ENCODE measurements at regions of chr15 and their contacts with region 1.

Region 1: GRCh38 chr15:41568350-41569017 is 9.5 kb downstream of the TYRO3 start:
- DNase-seq: peak; percentile 98
- ATAC-seq: peak; percentile 88
- H3K4me3 ChIP-seq: peak overlapping the region in 2 of 3 experiments; percentile 14 to 54; a peak in 4 of 6 replicates
- H3K27ac ChIP-seq: peak overlapping the region; percentile 91
- H3K4me1 ChIP-seq: peaks cover 84% of the 10 kb centered on the region
- H3K27me3 ChIP-seq: no peaks in the 10 kb centered on the region
- CTCF ChIP-seq: peak; percentile 42
- EP300 ChIP-seq: peak; percentile 83 to 94
- POLR2A ChIP-seq: peak in 1 of 2 experiments; percentile 49; a peak in 2 of 4 replicates
- RAD21 ChIP-seq: 0 out of 2 replicates have a peak, but pooled peaks have one; percentile 53

Region 2: GRCh38 chr15:41544650-41545015 is 23.9 kb before region 1 on chr15:
- CTCF ChIA-PET with region 1: no interaction called
- POLR2A ChIA-PET with region 1: interaction called, 19 read pairs
- in situ Hi-C with region 1: no loop called
- intact Hi-C with region 1: no loop called
- DNase-seq: no peak
- ATAC-seq: peak; percentile 10
- H3K4me3 ChIP-seq: peak overlapping the region in 2 of 3 experiments; percentile 65 to 85; a peak in 3 of 6 replicates
- H3K27ac ChIP-seq: no peak overlapping the region
- H3K4me1 ChIP-seq: peaks cover 40% of the 10 kb centered on the region
- H3K27me3 ChIP-seq: no peaks in the 10 kb centered on the region
- CTCF ChIP-seq: no peak
- EP300 ChIP-seq: no peak
- POLR2A ChIP-seq: no peak
- RAD21 ChIP-seq: no peak

Region 3: DNA sequence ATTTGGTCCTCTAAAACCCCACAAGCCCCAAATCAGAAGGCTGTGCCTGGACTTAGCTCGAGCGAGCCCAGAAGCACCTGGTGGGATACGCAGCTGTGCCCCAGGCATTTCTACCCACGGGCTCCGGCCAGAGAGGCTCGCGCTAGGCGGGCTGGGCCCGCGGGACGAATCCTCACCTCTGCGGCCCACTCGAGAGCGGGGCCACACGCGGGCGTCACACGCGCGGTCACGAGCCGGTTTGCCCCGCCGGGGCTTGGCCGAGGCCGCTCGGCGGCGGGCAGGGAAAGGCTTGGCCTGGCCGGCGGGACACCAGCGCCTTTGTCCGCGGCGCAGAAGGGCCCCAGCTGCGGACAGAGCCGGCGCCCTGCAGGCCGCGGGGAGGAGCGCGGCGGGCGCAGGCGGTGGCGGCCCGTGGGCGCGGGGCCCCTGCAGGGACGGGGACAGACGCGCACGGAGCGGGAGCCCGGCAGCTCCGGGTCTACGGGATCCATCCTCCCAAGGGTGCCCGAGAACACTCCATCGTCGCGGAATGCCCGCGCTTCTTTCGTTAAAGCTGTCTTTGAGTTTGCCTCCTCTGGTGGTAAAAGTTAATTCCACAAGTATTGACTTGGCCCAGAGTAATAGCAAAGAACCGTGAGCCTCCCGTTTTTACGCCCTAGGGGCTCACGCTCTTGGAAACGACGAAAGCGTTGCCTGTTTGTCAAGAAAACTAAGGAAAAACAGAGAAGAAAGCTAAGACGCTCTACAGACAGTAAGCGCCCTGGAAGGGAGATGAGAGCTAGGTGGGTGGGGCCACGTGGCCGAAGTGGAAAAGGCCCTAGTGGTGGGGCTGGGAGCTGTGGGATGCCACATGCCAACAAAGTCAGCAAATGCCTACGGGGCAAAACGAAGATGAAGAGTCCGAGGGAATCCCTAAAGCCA is 16.9 kb after region 1 on chr15:
- CTCF ChIA-PET with region 1: no interaction called
- POLR2A ChIA-PET with region 1: interaction called, 32 read pairs
- in situ Hi-C with region 1: no loop called
- intact Hi-C with region 1: no loop called
- DNase-seq: no peak
- ATAC-seq: peak; percentile 91
- H3K4me3 ChIP-seq: peak overlapping the region; percentile 57 to 70 (median 57); a peak in 5 of 6 replicates
- H3K27ac ChIP-seq: peak overlapping the region; percentile 61
- H3K4me1 ChIP-seq: peaks cover 20% of the 10 kb centered on the region
- H3K27me3 ChIP-seq: no peaks in the 10 kb centered on the region
- CTCF ChIP-seq: 0 out of 2 replicates have a peak, but pooled peaks have one; percentile 24
- EP300 ChIP-seq: no peak
- POLR2A ChIP-seq: no peak
- RAD21 ChIP-seq: peak; percentile 48

Region 4: DNA sequence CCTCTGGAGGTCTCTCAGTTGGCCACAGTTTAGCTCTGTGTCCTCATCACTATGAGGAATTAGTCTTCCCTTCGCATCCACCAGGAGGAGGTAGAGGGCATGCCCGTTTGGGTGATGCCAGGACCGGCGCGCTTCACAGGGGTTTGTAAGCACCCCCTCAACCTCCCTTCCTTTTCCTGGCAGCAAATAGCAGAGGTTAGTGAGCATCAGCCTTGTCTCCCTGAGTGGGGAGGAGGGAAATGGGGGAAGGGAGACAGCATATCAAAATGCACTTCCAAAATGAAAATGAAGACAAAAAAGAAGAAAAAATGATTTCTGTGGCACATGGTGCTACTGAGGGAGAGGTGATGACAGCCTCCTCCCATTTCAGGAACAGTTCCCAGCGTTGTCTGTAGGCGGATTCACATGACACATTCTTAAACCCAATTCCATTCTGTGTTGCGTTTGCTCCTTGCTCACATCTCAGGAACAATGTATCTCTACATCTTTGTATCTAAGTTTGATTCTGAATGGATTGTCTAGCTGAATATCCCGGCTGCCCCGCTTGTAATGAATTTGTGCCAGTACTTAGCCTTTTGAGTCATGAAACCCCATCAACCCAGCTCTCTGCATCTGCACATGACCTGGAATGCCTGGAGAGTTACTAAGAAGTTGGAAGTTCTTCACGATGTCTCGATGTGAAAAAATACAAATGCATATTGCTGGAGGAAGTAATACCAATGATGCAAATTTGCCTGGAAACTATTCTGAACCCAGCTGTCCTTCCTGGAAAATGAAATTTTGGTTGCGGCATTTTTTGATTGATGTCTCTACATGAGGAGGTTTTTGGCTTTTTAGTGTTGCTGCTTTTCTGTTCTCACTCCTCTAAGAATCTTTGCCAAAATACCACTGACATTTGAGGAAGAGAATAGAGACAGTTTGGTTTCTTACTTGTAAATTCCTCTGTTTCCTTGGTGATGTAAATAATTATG is 35.7 kb after region 1 on chr15:
- CTCF ChIA-PET with region 1: no interaction called
- POLR2A ChIA-PET with region 1: interaction called, 10 read pairs
- in situ Hi-C with region 1: no loop called
- intact Hi-C with region 1: no loop called
- DNase-seq: peak; percentile 63
- ATAC-seq: peak; percentile 95
- H3K4me3 ChIP-seq: peak overlapping the region in 1 of 3 experiments; percentile 47; a peak in 2 of 6 replicates
- H3K27ac ChIP-seq: no peak overlapping the region
- H3K4me1 ChIP-seq: peaks cover 23% of the 10 kb centered on the region
- H3K27me3 ChIP-seq: no peaks in the 10 kb centered on the region
- CTCF ChIP-seq: peak; percentile 86
- EP300 ChIP-seq: no peak
- POLR2A ChIP-seq: no peak
- RAD21 ChIP-seq: peak; percentile 78

Region 5: GRCh38 chr15:41621200-41622193 is 53.0 kb after region 1 on chr15:
- CTCF ChIA-PET with region 1: no interaction called
- POLR2A ChIA-PET with region 1: interaction called, 17 read pairs
- in situ Hi-C with region 1: no loop called
- intact Hi-C with region 1: no loop called
- DNase-seq: peak; percentile 78
- ATAC-seq: peak; percentile 95
- H3K4me3 ChIP-seq: peak overlapping the region; percentile 36 to 63 (median 59); a peak in 5 of 6 replicates
- H3K27ac ChIP-seq: peak overlapping the region; percentile 83
- H3K4me1 ChIP-seq: peaks cover 26% of the 10 kb centered on the region
- H3K27me3 ChIP-seq: no peaks in the 10 kb centered on the region
- CTCF ChIP-seq: no peak
- EP300 ChIP-seq: peak in 1 of 2 experiments; percentile 38; a peak in 1 of 4 replicates
- POLR2A ChIP-seq: peak; percentile 60 to 81
- RAD21 ChIP-seq: peak; percentile 10; the same call in 1 of the 2 replicates

Measured in HepG2 (cell line).